Posterior cingulate gyrus (tissue), 11 donors: ENCODE measurements at regions of chr18 and their contacts with region 1.

Region 1: DNA sequence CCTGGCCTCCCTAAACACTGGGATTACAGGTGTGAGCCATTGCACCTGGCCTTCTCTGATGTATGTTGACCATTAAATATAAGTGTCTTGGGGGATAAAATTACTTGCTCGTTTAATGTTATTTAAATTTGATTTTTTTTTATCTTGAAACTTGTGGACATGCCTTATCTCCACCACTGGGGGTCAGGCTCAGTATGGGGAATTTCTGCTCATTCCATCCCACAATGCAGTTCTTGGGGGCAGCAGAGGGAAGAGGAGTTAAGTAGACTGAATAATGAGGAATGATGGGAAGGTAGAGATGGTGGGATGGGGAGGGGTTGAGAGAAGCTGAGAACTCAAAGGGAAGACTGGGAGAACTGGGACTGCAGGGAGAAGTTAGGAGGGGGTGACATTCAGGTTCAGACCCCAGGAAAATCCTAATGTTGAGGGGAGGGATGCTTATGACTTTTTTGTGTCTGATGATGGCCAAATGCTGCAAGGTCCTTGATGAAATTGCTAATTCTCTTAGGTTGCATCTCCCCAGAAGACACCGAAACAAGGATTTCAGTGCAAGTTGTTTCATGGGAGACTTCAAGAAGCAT is 174.2 kb downstream of the MIB1 start:
- DNase-seq: no peak

Region 2: GRCh38 chr18:21786526-21786925 is 128.3 kb before region 1 on chr18:
- intact Hi-C with region 1: no loop called
- DNase-seq: no peak

Region 3: GRCh38 chr18:22052405-22053105 is 137.7 kb after region 1 on chr18:
- intact Hi-C with region 1: no loop called
- DNase-seq: no peak

Region 4: DNA sequence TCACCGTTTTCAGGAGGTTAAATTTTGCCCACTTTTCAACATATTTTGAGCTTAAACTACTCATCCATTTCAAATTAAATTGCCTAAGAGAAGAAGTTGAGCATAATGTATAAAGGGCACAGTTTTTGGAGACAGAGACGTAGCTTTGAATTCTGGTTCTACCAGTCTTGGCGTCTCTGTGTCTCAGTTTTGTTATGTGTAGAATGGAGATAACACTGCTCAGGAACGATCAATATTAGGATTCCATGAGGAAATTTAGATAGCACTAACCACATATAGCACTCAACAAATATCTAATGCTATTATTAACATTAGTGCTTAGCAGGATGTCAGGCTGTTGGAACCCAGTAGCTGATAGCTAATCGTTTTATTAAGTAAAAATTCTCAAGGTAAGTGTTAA is 214.1 kb after region 1 on chr18:
- intact Hi-C with region 1: loop called (anchors 10 kb)
- DNase-seq: no peak